Posterior cingulate gyrus (tissue), 11 donors: ENCODE measurements at regions of chr6 and their contacts with region 1.

Region 1: GRCh38 chr6:71012866-71013469 is 56.1 kb upstream of the B3GAT2 start:
- DNase-seq: peak in 1 of 10 donors; percentile 11

Region 2: GRCh38 chr6:70369332-70369950 is 643.5 kb before region 1 on chr6:
- intact Hi-C with region 1: loop called (anchors 2 kb)
- DNase-seq: peak; percentile 30 to 95 (median 72)

Region 3: GRCh38 chr6:70933853-70934252 is 79.1 kb before region 1 on chr6:
- intact Hi-C with region 1: no loop called
- DNase-seq: no peak